AG04450 (cell line): ENCODE measurements at regions of chr2 and their contacts with region 1.

Region 1: DNA sequence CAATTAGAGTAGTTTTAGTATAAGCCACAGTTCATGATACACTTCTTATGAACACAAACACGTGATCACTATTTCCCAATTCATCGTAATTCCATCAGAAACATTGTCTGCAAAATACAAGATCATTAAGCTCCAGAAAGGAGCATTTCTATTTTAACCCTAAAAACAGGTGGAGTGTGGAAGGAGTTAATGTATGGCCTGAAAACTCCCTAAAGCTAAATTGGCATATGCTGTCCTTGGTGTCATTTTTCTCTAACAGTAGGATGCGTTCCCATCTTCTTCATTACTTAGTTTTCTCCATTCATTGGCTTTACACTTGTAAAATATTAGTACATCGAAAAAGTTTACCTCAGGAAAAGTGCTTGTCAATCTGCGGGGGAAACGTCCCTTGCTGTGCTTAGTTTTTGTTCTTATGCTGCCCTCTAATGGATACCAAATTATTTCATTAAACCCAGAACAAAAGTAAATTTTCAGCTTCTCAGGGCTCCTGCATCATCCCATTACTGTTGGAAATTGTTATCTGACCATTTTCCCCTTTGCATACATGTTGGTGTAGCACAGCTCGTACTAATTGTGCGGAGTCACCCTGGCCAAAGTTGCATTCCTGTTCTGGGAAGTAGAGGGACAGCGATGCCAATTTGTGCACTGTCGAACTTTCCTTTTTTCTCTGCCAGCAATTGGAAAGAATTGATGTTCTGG is 153.4 kb downstream of the GPD2 start:
- DNase-seq: peak; percentile 11
- H3K4me3 ChIP-seq: no peak overlapping the region
- H3K27ac ChIP-seq: no peak overlapping the region
- H3K27me3 ChIP-seq: no peaks in the 10 kb centered on the region
- CTCF ChIP-seq: peak; percentile 68

Region 2: DNA sequence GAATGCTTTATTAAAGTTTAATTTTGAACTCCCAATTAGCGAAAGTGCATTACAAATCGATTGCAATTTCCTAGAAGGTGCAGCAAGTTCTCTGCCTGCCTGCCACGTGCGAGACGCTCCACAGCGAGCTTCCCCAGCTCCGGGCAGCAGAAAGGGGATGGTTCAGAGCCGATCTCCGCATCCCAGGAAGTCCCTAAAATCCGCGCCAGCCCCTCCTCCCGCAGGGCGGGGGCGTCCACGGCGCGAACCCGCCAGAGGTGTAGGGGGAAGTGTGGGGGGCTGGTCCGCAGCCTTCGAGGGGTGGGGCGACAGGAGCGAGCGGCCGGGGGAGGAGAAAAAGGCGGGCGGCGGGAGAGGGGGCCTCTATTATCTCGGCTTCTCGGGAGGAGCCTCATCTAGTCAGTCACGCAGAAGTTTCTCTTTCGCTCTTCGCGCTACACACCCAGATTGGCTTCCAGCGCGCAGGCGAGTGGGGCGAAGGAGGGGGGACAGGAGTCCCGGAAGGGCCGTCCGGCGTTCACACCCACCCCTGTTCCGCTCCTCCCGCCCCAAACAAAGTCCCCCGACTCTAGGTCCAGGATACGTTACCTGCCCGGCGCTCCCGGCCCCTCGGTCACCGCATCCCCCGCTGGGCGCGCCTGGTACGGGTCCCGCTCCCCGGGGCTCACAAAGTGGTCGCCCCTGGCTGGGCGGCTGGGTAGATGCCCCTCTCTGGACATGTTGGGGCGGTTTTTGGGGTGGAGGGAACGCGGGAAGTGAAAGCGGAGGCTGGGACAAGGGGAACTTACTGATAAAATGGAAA is 247.9 kb before region 1 on chr2:
- CTCF ChIA-PET with region 1: interaction called, 13 read pairs
- POLR2A ChIA-PET with region 1: no interaction called
- DNase-seq: peak; percentile 89
- H3K4me3 ChIP-seq: peak overlapping the region; percentile 82
- H3K27ac ChIP-seq: peak overlapping the region; percentile 100
- H3K27me3 ChIP-seq: no peaks in the 10 kb centered on the region
- CTCF ChIP-seq: no peak

Region 3: DNA sequence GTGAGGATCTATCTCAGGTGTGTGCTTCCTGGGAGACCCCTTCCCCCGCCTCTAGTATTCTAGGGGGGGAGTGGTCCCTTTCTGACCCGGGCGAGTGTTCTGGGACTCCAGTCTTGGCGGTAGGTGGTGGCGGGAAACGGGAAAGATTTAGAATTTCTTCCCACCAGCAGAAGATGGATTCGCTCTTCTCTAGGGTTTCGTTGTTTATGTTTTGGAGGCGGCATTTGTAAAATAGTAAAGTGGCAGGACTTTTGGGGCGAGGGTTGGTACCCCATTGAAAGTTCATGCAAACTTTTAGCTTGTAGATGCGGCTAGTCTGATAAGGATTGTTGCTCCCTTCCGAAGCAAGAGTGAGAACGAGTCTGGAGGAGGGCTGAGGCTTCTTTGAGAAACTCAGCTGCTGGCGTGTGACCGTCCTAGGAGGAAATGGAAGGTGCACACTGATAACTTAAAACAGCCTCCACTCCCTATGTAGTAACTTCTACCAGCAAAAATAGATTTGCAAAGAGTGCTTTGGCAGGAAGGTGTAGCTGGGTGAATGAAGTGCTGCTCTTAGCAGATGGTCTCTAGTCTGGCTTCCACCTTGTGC is 152.9 kb before region 1 on chr2:
- CTCF ChIA-PET with region 1: no interaction called
- POLR2A ChIA-PET with region 1: no interaction called
- DNase-seq: no peak
- H3K4me3 ChIP-seq: peak overlapping the region; percentile 76
- H3K27ac ChIP-seq: peak overlapping the region; percentile 57
- H3K27me3 ChIP-seq: no peaks in the 10 kb centered on the region
- CTCF ChIP-seq: no peak

Region 4: GRCh38 chr2:156526950-156527636 is 62.4 kb before region 1 on chr2:
- CTCF ChIA-PET with region 1: no interaction called
- POLR2A ChIA-PET with region 1: no interaction called
- DNase-seq: no peak
- H3K4me3 ChIP-seq: no peak overlapping the region
- H3K27ac ChIP-seq: no peak overlapping the region
- H3K27me3 ChIP-seq: no peaks in the 10 kb centered on the region
- CTCF ChIP-seq: no peak